HepG2 (cell line): ENCODE measurements at regions of chr1 and their contacts with region 1.

Region 1: GRCh38 chr1:214029796-214030195 is 42.0 kb downstream of the PROX1 start:
- DNase-seq: no peak
- ATAC-seq: no peak
- H3K4me3 ChIP-seq: no peak overlapping the region
- H3K27ac ChIP-seq: peak overlapping the region; percentile 85
- H3K4me1 ChIP-seq: peaks cover 81% of the 10 kb centered on the region
- H3K27me3 ChIP-seq: no peaks in the 10 kb centered on the region
- CTCF ChIP-seq: no peak
- EP300 ChIP-seq: no peak
- POLR2A ChIP-seq: no peak
- RAD21 ChIP-seq: no peak

Region 2: DNA sequence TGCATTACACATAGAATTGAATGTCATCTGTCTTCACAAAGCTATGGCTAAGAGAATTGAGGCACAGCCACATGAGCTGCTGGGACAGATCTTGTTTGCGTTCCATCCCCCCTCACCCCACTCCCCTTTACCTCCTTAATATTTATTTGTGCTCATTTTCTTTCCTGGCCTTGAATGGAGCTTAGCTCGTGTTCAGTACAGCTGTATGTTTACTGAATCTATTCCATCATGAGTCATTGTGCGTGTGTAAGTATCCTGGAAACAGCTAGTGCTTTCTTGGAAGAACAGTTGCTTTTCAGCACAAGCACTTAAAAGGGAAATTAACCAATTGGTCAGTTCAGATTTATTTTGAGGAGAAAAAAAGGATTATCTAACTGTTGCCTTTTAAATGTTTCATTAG is 27.3 kb before region 1 on chr1:
- CTCF ChIA-PET with region 1: no interaction called
- POLR2A ChIA-PET with region 1: interaction called, 21 read pairs
- in situ Hi-C with region 1: no loop called
- intact Hi-C with region 1: no loop called
- DNase-seq: peak; percentile 78
- ATAC-seq: peak; percentile 72
- H3K4me3 ChIP-seq: no peak overlapping the region
- H3K27ac ChIP-seq: peak overlapping the region; percentile 50
- H3K4me1 ChIP-seq: peaks cover 83% of the 10 kb centered on the region
- H3K27me3 ChIP-seq: no peaks in the 10 kb centered on the region
- CTCF ChIP-seq: no peak
- EP300 ChIP-seq: peak in 1 of 2 experiments; percentile 78; a peak in 2 of 4 replicates
- POLR2A ChIP-seq: no peak
- RAD21 ChIP-seq: no peak

Region 3: GRCh38 chr1:214044438-214045214 is 14.8 kb after region 1 on chr1:
- CTCF ChIA-PET with region 1: no interaction called
- POLR2A ChIA-PET with region 1: interaction called, 150 read pairs
- in situ Hi-C with region 1: no loop called
- intact Hi-C with region 1: no loop called
- DNase-seq: peak; percentile 81
- ATAC-seq: peak; percentile 91
- H3K4me3 ChIP-seq: no peak overlapping the region; a peak in 1 of 6 replicates
- H3K27ac ChIP-seq: peak overlapping the region; percentile 79
- H3K4me1 ChIP-seq: peaks cover 79% of the 10 kb centered on the region
- H3K27me3 ChIP-seq: no peaks in the 10 kb centered on the region; a peak in 1 of 5 replicates
- CTCF ChIP-seq: no peak
- EP300 ChIP-seq: peak; percentile 42 to 87
- POLR2A ChIP-seq: no peak
- RAD21 ChIP-seq: no peak

Region 4: DNA sequence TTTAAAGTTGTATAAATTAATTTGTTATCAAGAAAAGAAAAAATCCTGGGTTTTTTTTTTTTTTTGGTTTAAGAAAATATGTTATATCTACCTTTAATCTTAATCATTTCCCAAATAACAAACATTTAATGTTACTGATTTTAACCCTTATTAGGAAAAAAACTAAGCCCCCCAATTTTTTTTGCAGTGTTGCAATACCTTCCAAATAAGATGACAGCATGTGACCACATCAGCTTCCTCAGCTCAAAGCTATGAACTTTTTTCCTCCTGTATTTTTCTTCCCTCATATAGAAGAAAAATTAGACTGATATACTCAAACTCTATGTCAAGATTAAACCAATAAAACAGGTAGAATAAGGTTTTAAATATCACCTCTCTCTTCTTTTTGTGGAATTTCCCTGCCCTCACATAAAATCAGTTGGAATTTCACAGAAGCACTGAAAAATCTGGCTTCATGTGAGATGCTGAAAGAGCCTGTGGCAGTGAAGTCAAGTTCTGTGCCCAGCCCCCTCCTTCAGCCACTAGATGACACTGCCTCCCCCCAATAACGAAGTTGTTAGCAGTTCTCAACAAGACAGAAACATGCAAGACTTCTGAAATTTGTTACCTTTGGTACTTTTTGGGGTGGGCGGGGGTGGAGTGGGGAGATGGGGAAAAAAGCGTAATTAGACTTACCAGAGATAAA is 241.5 kb after region 1 on chr1:
- CTCF ChIA-PET with region 1: no interaction called
- POLR2A ChIA-PET with region 1: no interaction called
- in situ Hi-C with region 1: no loop called
- intact Hi-C with region 1: no loop called
- DNase-seq: no peak
- ATAC-seq: 0 out of 3 replicates have a peak, but pooled peaks have one; percentile 40
- H3K4me3 ChIP-seq: no peak overlapping the region
- H3K27ac ChIP-seq: no peak overlapping the region
- H3K4me1 ChIP-seq: no peaks in the 10 kb centered on the region
- H3K27me3 ChIP-seq: 0 out of 5 replicates have a peak, but pooled peaks cover 0 to 2% of the 10 kb centered on the region in 2 experiments
- CTCF ChIP-seq: peak; percentile 60
- EP300 ChIP-seq: no peak
- POLR2A ChIP-seq: no peak
- RAD21 ChIP-seq: no peak